ENCODE measurements at regions of chr1 and their contacts with region 1.

Region 1: DNA sequence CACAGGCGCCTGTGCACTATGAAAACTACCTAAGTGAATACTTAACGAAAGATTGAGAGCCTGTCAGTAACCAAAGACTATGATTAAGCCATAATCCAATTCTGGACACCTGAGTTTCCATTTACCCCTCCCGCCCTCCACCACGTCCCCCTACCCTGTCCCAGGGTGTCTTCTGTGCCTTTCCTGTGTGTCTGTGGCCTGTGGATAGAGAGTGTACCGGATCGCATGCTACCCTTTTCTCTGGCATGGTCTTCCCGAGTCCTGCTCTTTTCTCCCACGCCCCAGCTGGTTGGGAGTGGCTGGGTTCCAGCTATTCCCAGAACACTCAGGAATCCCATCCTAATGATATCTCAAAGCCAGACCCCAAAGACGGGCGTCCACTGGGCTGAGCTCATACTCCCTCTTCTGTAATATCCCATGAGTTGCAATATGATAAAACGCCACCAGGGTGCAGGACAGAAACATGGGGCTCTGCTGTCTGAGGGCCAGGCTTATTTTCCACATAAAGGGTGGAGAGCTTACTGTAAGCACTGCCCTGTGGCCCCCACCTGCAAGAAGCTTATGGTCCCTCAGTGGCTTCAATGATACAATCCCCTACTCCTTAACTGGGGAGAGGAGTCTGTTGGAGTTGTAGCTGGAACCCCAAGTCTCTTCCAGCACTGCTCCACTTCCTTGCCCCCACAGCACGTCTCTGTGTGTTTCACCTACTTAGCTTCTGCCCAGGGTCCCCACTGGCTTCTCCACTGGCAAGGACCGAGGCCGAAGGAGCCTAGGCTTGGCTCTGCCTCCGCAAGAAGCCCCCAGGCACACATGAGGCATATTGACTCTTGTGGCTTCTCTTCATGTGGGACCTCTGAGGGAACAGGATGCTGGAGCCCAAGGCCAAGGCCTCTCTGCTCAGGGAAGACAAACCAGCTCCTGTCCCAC is 17.6 kb upstream of the ALX3 start:
- DNase-seq: peak; percentile 69
- ATAC-seq: peak; percentile 79
- H3K4me3 Mint-ChIP-seq: no peak overlapping the region
- H3K27ac Mint-ChIP-seq: no peak overlapping the region
- H3K4me1 Mint-ChIP-seq: peaks cover 7% of the 10 kb centered on the region
- H3K27me3 Mint-ChIP-seq: peaks cover 47% of the 10 kb centered on the region
- CTCF ChIP-seq: peak; percentile 73

Region 2: DNA sequence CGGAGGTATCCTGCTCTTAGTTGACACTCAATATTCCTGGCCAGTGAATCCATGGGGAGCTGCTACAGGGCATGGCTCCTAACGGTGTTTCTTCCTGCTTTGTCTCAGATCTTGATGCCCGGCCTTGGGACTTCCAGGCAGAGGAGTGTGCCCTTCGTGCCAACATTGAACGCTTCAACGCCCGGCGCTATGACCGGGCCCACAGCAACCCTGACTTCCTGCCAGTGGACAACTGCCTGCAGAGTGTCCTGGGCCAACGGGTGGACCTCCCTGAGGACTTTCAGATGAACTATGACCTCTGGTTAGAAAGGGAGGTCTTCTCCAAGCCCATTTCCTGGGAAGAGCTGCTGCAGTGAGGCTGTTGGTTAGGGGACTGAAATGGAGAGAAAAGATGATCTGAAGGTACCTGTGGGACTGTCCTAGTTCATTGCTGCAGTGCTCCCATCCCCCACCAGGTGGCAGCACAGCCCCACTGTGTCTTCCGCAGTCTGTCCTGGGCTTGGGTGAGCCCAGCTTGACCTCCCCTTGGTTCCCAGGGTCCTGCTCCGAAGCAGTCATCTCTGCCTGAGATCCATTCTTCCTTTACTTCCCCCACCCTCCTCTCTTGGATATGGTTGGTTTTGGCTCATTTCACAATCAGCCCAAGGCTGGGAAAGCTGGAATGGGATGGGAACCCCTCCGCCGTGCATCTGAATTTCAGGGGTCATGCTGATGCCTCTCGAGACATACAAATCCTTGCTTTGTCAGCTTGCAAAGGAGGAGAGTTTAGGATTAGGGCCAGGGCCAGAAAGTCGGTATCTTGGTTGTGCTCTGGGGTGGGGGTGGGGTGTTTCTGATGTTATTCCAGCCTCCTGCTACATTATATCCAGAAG is 34.3 kb before region 1 on chr1:
- CTCF ChIA-PET with region 1: interaction called, 26 read pairs
- POLR2A ChIA-PET with region 1: interaction called, 3 read pairs
- intact Hi-C with region 1: no loop called
- DNase-seq: peak; percentile 84
- ATAC-seq: peak; percentile 94
- H3K4me3 Mint-ChIP-seq: no peak overlapping the region
- H3K27ac Mint-ChIP-seq: no peak overlapping the region
- H3K4me1 Mint-ChIP-seq: no peaks in the 10 kb centered on the region
- H3K27me3 Mint-ChIP-seq: no peaks in the 10 kb centered on the region
- CTCF ChIP-seq: peak; percentile 94

Region 3: GRCh38 chr1:110070282-110070669 is 17.8 kb before region 1 on chr1:
- CTCF ChIA-PET with region 1: interaction called, 20 read pairs
- POLR2A ChIA-PET with region 1: interaction called, 4 read pairs
- intact Hi-C with region 1: no loop called
- DNase-seq: no peak
- ATAC-seq: no peak
- H3K4me3 Mint-ChIP-seq: no peak overlapping the region
- H3K27ac Mint-ChIP-seq: no peak overlapping the region
- H3K4me1 Mint-ChIP-seq: peaks cover 12% of the 10 kb centered on the region
- H3K27me3 Mint-ChIP-seq: peaks cover 57% of the 10 kb centered on the region
- CTCF ChIP-seq: no peak

Region 4: DNA sequence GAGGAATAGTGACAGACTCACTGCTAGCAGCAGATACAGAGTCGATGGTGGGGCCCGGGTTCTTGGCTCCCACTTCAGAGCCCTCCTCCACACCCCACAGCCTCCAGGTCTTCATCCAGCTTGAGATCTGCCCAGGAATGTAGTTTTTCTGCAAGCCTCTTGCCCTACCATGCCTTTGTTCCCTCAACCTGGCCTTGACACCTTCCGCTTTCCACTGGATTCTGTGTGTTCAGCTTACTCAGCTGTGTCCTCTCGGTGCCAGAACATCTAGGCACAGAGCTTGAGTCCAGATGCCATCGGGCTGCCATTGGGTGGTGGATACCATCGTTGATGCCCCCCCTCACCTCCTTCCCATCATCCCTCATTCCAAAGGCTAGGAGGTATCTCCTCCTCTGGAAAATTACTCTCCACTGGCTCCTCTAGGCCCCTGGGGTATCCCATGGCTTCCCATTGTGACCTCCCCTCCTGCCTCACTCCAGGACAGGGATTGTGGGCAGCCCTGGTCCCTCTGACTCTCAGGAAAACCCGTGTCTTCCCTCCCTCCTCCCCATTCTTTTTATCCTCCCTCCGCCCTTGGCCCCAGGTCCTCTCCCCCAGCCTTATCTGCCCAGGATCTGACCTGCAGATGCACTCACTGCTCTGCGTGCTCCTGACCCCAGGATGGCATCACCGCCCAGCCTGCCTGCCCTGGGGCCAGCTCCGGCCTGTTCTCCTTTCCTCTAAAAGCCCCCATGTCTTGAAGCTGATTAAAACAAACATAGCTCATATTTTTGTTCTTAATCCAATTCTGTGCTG is 10.0 kb after region 1 on chr1:
- CTCF ChIA-PET with region 1: interaction called, 156 read pairs
- POLR2A ChIA-PET with region 1: no interaction called
- intact Hi-C with region 1: no loop called
- DNase-seq: no peak
- ATAC-seq: no peak
- H3K4me3 Mint-ChIP-seq: no peak overlapping the region
- H3K27ac Mint-ChIP-seq: no peak overlapping the region
- H3K4me1 Mint-ChIP-seq: no peaks in the 10 kb centered on the region
- H3K27me3 Mint-ChIP-seq: peaks cover 5% of the 10 kb centered on the region
- CTCF ChIP-seq: no peak

Region 5: DNA sequence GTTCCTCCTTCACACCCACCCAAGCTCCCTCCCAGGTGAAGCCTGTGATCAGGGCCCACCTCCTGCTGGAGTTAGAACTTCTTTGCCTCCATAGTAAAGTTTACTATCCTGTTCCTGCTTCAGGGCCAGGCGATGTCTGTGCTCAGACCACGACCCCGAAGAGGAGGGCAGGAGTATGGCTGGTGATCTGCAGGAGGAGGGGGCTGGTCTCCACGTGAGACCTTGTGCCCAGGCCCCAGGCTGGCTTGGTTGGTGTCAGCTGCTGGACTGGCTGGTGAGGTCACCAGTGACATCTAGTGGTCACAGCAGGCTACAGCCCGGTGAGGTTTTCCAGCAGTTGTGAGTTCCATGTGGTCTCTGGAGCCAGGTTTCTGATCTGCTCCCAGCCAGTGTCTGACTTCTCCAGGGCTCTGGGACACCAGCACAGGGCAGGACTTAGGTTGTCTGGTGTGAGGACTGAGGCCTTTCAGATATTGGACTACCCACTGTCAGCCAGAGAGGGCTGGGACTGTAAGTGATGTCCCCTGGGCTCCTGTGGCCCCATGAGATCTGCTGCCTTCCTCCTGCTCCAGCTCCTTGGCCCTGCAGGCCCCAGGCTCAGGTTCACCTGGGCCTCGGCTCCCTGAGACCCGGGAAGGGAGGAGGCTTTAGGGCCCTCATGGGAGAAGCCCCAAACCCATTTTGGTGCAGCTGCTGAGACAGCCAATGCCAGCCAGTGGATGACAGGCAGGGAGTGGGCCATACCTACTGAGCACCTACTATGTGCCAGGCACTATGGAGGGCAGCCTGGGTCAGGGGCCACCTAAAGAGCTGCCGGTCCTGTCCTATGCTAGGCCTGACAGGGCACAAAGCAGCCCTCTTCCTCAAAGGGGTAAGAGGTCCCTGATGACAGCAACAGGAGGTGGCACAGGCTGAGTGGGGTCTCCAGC is 18.2 kb after region 1 on chr1:
- CTCF ChIA-PET with region 1: interaction called, 156 read pairs
- POLR2A ChIA-PET with region 1: interaction called, 4 read pairs
- intact Hi-C with region 1: no loop called
- DNase-seq: peak; percentile 69
- ATAC-seq: peak; percentile 94
- H3K4me3 Mint-ChIP-seq: no peak overlapping the region
- H3K27ac Mint-ChIP-seq: no peak overlapping the region
- H3K4me1 Mint-ChIP-seq: no peaks in the 10 kb centered on the region
- H3K27me3 Mint-ChIP-seq: peaks cover 5% of the 10 kb centered on the region
- CTCF ChIP-seq: peak; percentile 82

Region 6: GRCh38 chr1:110118636-110119615 is 30.9 kb after region 1 on chr1:
- CTCF ChIA-PET with region 1: interaction called, 31 read pairs
- POLR2A ChIA-PET with region 1: no interaction called
- intact Hi-C with region 1: no loop called
- DNase-seq: peak; percentile 66
- ATAC-seq: peak; percentile 89
- H3K4me3 Mint-ChIP-seq: no peak overlapping the region
- H3K27ac Mint-ChIP-seq: no peak overlapping the region
- H3K4me1 Mint-ChIP-seq: peaks cover 12% of the 10 kb centered on the region
- H3K27me3 Mint-ChIP-seq: peaks cover 8% of the 10 kb centered on the region
- CTCF ChIP-seq: no peak

Measured in activated CD8-positive, alpha-beta T cell treated with anti-CD3 and anti-CD28 coated beads for 36 hours (primary cell).